Activated CD4-positive, alpha-beta memory T cell treated with anti-CD3 and anti-CD28 coated beads, Interleukin-2, amount 10 ng/mL, durations not matched to agents 7 days and 5 days (primary cell): ENCODE measurements at regions of chr9 and their contacts with region 1.

Region 1: DNA sequence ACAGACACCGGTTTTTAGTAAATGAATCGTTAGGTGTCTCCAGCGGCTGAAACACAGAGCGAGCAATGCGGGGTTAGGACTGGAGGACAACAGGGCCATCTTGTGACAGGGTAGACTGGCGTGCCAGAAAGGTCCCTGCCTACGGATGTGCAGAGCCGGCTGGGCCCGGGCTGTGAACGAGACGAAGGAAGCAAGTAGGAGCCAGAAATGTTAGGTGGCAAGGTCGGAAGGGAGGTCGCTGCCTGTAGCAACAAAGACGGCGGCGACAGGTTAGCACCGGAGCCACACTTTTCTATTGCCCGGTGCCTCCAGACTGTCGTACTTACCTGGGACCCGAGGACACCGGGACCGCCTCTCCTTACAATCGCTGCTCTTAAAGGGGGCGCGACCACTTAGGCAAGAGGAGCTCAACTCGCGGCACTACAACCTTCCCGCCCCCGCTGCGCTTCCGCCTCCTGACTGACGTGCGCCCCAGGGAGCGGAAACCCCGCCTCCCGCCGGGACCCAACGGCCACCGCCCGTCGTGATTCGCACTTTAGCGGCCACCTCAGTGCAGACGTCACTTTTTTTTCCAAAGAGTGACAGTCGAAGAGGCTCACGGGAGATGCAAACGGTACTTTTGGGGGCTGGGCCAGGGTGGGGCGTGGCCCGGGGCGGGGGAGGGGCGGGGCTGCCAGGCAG is at the start of gene INIP:
- DNase-seq: peak; percentile 98
- H3K4me3 Mint-ChIP-seq: peak within 1 kb of the TSS; percentile 94
- H3K27ac Mint-ChIP-seq: peak within 1 kb of the TSS; percentile 99
- H3K4me1 Mint-ChIP-seq: peaks cover 43% of the 10 kb centered on the region
- H3K27me3 Mint-ChIP-seq: no peaks in the 10 kb centered on the region
- total RNA-seq, gene INIP: 36.1 to 38.1 TPM

Region 2: DNA sequence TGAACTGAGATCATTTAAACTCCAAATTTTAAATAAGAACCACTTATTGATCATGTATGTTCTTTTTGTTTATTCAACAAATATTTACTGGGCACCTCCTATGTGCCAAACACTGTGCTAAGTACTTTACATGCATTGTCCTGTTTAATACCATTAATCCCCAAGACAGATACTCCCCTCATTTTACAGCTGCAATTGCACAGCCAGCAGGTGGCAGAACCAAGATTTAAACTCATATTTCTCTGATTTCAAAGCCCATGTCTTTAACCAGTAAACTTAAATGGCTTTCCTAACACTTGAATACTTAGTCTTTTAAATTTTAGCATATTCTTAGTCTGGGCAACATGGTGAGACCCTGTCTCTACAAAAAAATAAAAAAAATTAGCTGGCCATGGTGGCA is 274.6 kb before region 1 on chr9:
- CTCF ChIA-PET with region 1: interaction called, 15 read pairs
- POLR2A ChIA-PET with region 1: no interaction called
- DNase-seq: peak; percentile 21
- H3K4me3 Mint-ChIP-seq: no peak overlapping the region
- H3K27ac Mint-ChIP-seq: no peak overlapping the region
- H3K4me1 Mint-ChIP-seq: peaks cover 6% of the 10 kb centered on the region
- H3K27me3 Mint-ChIP-seq: no peaks in the 10 kb centered on the region

Region 3: GRCh38 chr9:112750111-112750767 is 32.4 kb after region 1 on chr9 and contains the start of gene SNX30:
- CTCF ChIA-PET with region 1: interaction called, 4 read pairs
- POLR2A ChIA-PET with region 1: interaction called, 49 read pairs
- DNase-seq: peak; percentile 83
- H3K4me3 Mint-ChIP-seq: peak within 1 kb of the TSS; percentile 78
- H3K27ac Mint-ChIP-seq: peak within 1 kb of the TSS; percentile 72
- H3K4me1 Mint-ChIP-seq: peaks cover 56% of the 10 kb centered on the region
- H3K27me3 Mint-ChIP-seq: peaks cover 7% of the 10 kb centered on the region
- total RNA-seq, gene SNX30: 8.2 to 8.4 TPM

Region 4: GRCh38 chr9:112793213-112793810 is 75.5 kb after region 1 on chr9:
- CTCF ChIA-PET with region 1: interaction called, 11 read pairs
- POLR2A ChIA-PET with region 1: interaction called, 4 read pairs
- DNase-seq: peak; percentile 85
- H3K4me3 Mint-ChIP-seq: no peak overlapping the region
- H3K27ac Mint-ChIP-seq: no peak overlapping the region
- H3K4me1 Mint-ChIP-seq: peaks cover 6% of the 10 kb centered on the region
- H3K27me3 Mint-ChIP-seq: no peaks in the 10 kb centered on the region